CD8-positive, alpha-beta T cell (primary cell): ENCODE measurements at regions of chr15 and their contacts with region 1.

Region 1: GRCh38 chr15:74937596-74938296 is at the start of gene COX5A:
- DNase-seq: peak; percentile 83 to 97 (median 88)
- ATAC-seq: peak; percentile 96
- H3K4me3 ChIP-seq: peak within 1 kb of the TSS; percentile 73 to 86
- H3K4me3 Mint-ChIP-seq: peak within 1 kb of the TSS; percentile 88
- H3K27ac ChIP-seq: peak within 1 kb of the TSS; percentile 72 to 73
- H3K27ac Mint-ChIP-seq: peak within 1 kb of the TSS; percentile 92
- H3K4me1 ChIP-seq: peaks cover 14% of the 10 kb centered on the region
- H3K4me1 Mint-ChIP-seq: peaks cover 31% of the 10 kb centered on the region
- H3K27me3 ChIP-seq: no peaks in the 10 kb centered on the region
- H3K27me3 Mint-ChIP-seq: no peaks in the 10 kb centered on the region
- CTCF ChIP-seq: no peak
- total RNA-seq, gene COX5A: 40.0 to 42.6 TPM

Region 2: GRCh38 chr15:73991726-73992593 is 945.8 kb before region 1 on chr15 and contains the start of gene STOML1:
- CTCF ChIA-PET with region 1: no interaction called
- POLR2A ChIA-PET with region 1: no interaction called
- intact Hi-C with region 1: loop called in 1 of 2 experiments (anchors 10 kb)
- DNase-seq: peak; percentile 88 to 97 (median 96)
- ATAC-seq: peak; percentile 79
- H3K4me3 ChIP-seq: peak within 1 kb of the TSS; percentile 62 to 88
- H3K4me3 Mint-ChIP-seq: peak within 1 kb of the TSS; percentile 100
- H3K27ac ChIP-seq: peak within 1 kb of the TSS; percentile 53
- H3K27ac Mint-ChIP-seq: peak within 1 kb of the TSS; percentile 73
- H3K4me1 ChIP-seq: peaks cover 42% of the 10 kb centered on the region
- H3K4me1 Mint-ChIP-seq: peaks cover 48% of the 10 kb centered on the region
- H3K27me3 ChIP-seq: no peaks in the 10 kb centered on the region
- H3K27me3 Mint-ChIP-seq: no peaks in the 10 kb centered on the region
- CTCF ChIP-seq: peak; percentile 95
- total RNA-seq, gene STOML1: 2.5 to 4.8 TPM

Region 3: GRCh38 chr15:74695597-74696397 is 241.9 kb before region 1 on chr15 and contains the start of gene EDC3:
- CTCF ChIA-PET with region 1: no interaction called
- POLR2A ChIA-PET with region 1: no interaction called
- intact Hi-C with region 1: loop called in 1 of 2 experiments (anchors 5 kb)
- DNase-seq: peak; percentile 72 to 94 (median 89)
- ATAC-seq: peak; percentile 88
- H3K4me3 ChIP-seq: peak within 1 kb of the TSS; percentile 79 to 93
- H3K4me3 Mint-ChIP-seq: peak within 1 kb of the TSS; percentile 100
- H3K27ac ChIP-seq: peak within 1 kb of the TSS; percentile 80 to 83
- H3K27ac Mint-ChIP-seq: peak within 1 kb of the TSS; percentile 99
- H3K4me1 ChIP-seq: peaks cover 14% of the 10 kb centered on the region
- H3K4me1 Mint-ChIP-seq: peaks cover 47% of the 10 kb centered on the region
- H3K27me3 ChIP-seq: peaks cover 0 to 1% of the 10 kb centered on the region in 2 experiments
- H3K27me3 Mint-ChIP-seq: no peaks in the 10 kb centered on the region
- CTCF ChIP-seq: no peak
- total RNA-seq, gene EDC3: 9.8 to 11.8 TPM

Region 4: DNA sequence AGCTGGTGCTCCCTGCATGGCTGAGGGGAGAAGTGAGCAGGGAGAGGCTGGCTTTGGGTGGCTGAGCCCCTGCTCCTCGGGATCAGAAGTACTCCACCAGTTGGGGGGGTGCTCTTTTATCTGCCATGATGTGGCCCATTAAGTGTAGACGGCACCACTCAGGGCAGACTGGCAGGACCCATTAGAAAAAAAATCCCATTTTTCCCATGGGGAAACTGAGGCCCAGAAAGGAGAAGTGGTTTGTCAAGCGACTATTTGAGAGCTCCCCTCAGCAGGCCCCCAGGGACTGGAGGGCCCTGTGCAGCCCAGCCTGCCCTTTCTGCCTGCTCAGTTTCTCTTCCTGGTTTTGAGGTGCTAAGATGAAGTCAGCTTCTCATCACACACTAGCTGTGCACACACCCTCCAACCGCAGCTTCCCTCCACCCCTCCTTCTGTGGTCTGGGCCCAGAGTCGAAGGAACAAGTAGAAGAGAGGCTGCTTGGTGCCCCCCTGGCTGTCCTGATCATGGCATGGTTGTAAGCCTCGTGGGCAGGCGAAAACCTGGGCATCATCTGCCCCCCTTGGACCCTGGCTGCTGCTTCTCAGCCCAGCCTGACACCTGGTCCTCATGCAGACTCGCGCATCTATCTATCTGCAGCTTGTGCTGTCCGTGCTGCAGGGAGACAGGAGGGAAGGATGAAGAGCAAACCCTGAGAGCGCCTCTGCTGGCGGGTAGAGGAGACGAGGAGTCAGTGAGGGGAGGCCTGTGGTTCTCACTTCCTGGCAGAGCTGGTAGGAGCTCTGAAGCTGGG is 150.3 kb before region 1 on chr15:
- CTCF ChIA-PET with region 1: interaction called, 3 read pairs
- POLR2A ChIA-PET with region 1: interaction called, 5 read pairs
- intact Hi-C with region 1: loop called (anchors 1 to 5 kb)
- DNase-seq: peak; percentile 81 to 97 (median 92)
- ATAC-seq: peak; percentile 71
- H3K4me3 ChIP-seq: peak overlapping the region; percentile 83 to 98
- H3K4me3 Mint-ChIP-seq: peak overlapping the region; percentile 83
- H3K27ac ChIP-seq: peak overlapping the region; percentile 53 to 90
- H3K27ac Mint-ChIP-seq: peak overlapping the region; percentile 92
- H3K4me1 ChIP-seq: peaks cover 76% of the 10 kb centered on the region
- H3K4me1 Mint-ChIP-seq: peaks cover 71% of the 10 kb centered on the region
- H3K27me3 ChIP-seq: no peaks in the 10 kb centered on the region
- H3K27me3 Mint-ChIP-seq: no peaks in the 10 kb centered on the region
- CTCF ChIP-seq: peak; percentile 62

Region 5: DNA sequence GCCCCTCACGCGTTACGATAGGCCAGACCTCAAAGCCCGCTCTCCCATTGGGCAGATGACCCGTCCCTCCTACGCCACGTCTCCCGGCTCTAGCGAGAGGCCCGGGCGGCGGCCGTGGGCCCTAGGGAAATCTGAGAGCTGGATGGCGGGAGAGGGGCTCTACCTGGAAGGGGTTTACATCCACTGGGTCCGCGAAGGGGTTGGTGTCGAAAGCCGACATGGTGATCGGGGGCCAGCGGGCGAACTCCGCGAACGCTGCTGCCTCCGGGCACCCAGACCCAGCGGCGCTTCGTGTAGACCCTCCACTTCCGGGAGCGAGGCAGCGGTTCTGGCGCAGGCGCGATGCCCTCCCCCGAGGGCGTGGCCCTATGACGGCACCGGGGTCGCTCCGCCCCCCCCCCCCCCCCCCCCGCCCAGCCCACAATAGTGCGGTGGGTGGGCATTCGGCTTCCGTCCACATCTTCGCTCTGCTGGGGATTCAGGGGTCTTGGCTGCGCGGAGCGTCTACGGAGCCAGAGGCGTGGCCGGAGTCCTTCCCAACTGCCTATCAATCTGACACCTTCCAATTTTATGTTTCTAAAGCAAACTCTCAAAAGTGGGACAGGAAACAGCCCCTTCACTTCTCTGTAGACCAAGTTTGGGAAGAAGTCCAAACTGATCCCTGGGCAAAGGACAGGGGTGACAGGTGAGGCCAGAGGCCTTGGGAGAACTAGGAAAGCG is 64.5 kb before region 1 on chr15 and contains the start of gene SCAMP2:
- CTCF ChIA-PET with region 1: no interaction called
- POLR2A ChIA-PET with region 1: no interaction called
- intact Hi-C with region 1: loop called (anchors 1 kb)
- DNase-seq: peak; percentile 82 to 96 (median 90)
- ATAC-seq: peak; percentile 93
- H3K4me3 ChIP-seq: peak within 1 kb of the TSS; percentile 84 to 96
- H3K4me3 Mint-ChIP-seq: peak within 1 kb of the TSS; percentile 98
- H3K27ac ChIP-seq: peak within 1 kb of the TSS; percentile 87 to 95
- H3K27ac Mint-ChIP-seq: peak within 1 kb of the TSS; percentile 95
- H3K4me1 ChIP-seq: peaks cover 43% of the 10 kb centered on the region
- H3K4me1 Mint-ChIP-seq: peaks cover 45% of the 10 kb centered on the region
- H3K27me3 ChIP-seq: no peaks in the 10 kb centered on the region
- H3K27me3 Mint-ChIP-seq: no peaks in the 10 kb centered on the region
- CTCF ChIP-seq: no peak
- total RNA-seq, gene SCAMP2: 48.7 to 57.2 TPM

Region 6: GRCh38 chr15:74950078-74951000 is 12.6 kb after region 1 on chr15:
- CTCF ChIA-PET with region 1: interaction called, 10 read pairs
- POLR2A ChIA-PET with region 1: no interaction called
- intact Hi-C with region 1: no loop called
- DNase-seq: peak; percentile 65 to 84 (median 79)
- ATAC-seq: peak; percentile 99
- H3K4me3 ChIP-seq: no peak overlapping the region
- H3K4me3 Mint-ChIP-seq: no peak overlapping the region
- H3K27ac ChIP-seq: no peak overlapping the region
- H3K27ac Mint-ChIP-seq: no peak overlapping the region
- H3K4me1 ChIP-seq: no peaks in the 10 kb centered on the region
- H3K4me1 Mint-ChIP-seq: peaks cover 6% of the 10 kb centered on the region
- H3K27me3 ChIP-seq: peaks cover 0 to 2% of the 10 kb centered on the region in 2 experiments
- H3K27me3 Mint-ChIP-seq: no peaks in the 10 kb centered on the region
- CTCF ChIP-seq: peak; percentile 94

Region 7: GRCh38 chr15:74995241-74995778 is 57.6 kb after region 1 on chr15 and contains the start of gene SCAMP5:
- CTCF ChIA-PET with region 1: no interaction called
- POLR2A ChIA-PET with region 1: no interaction called
- intact Hi-C with region 1: loop called in 1 of 2 experiments (anchors 1 kb)
- DNase-seq: peak; percentile 80 to 95 (median 91)
- ATAC-seq: peak; percentile 100
- H3K4me3 ChIP-seq: peak within 1 kb of the TSS; percentile 49 to 71
- H3K4me3 Mint-ChIP-seq: peak within 1 kb of the TSS; percentile 85
- H3K27ac ChIP-seq: no peak within 1 kb of the TSS
- H3K27ac Mint-ChIP-seq: no peak within 1 kb of the TSS
- H3K4me1 ChIP-seq: peaks cover 17% of the 10 kb centered on the region
- H3K4me1 Mint-ChIP-seq: peaks cover 11% of the 10 kb centered on the region
- H3K27me3 ChIP-seq: peaks cover 9% of the 10 kb centered on the region in 2 experiments
- H3K27me3 Mint-ChIP-seq: peaks cover 38% of the 10 kb centered on the region
- CTCF ChIP-seq: no peak
- total RNA-seq, gene SCAMP5: 0.71 to 0.72 TPM